PC-3 (cell line): ENCODE measurements at regions of chr4 and their contacts with region 1.

Region 1: GRCh38 chr4:47510506-47511143 is 25.6 kb downstream of the ATP10D start:
- DNase-seq: peak; percentile 14
- ATAC-seq: no peak
- H3K4me3 ChIP-seq: no peak overlapping the region
- H3K27ac ChIP-seq: no peak overlapping the region
- H3K4me1 ChIP-seq: no peaks in the 10 kb centered on the region
- H3K27me3 ChIP-seq: peaks cover 11% of the 10 kb centered on the region
- CTCF ChIP-seq: peak; percentile 36; the same call in 1 of the 2 replicates

Region 2: DNA sequence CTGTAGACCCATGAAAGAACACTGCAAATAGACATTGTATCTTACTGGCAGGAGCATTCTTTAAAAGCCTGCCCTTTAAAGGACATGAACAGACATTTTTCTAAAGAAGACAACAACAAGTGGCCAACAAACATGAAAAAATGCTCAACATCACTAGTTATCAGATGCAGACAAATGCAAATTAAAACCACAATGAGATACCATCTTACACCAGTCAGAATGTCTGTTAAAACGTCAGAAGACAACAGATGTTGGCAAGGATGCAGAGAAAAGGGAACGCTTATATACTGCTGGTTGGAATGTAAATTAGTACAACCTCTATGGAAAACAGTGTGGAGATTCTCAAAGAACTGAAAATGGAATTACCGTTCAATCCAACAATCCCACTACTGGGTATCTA is 51.7 kb after region 1 on chr4:
- CTCF ChIA-PET with region 1: no interaction called
- POLR2A ChIA-PET with region 1: interaction called, 3 read pairs
- intact Hi-C with region 1: loop called (anchors 10 kb)
- DNase-seq: no peak
- ATAC-seq: no peak
- H3K4me3 ChIP-seq: no peak overlapping the region
- H3K27ac ChIP-seq: no peak overlapping the region
- H3K4me1 ChIP-seq: peaks cover 8% of the 10 kb centered on the region; the same call in 1 of the 2 replicates
- H3K27me3 ChIP-seq: no peaks in the 10 kb centered on the region
- CTCF ChIP-seq: no peak

Region 3: DNA sequence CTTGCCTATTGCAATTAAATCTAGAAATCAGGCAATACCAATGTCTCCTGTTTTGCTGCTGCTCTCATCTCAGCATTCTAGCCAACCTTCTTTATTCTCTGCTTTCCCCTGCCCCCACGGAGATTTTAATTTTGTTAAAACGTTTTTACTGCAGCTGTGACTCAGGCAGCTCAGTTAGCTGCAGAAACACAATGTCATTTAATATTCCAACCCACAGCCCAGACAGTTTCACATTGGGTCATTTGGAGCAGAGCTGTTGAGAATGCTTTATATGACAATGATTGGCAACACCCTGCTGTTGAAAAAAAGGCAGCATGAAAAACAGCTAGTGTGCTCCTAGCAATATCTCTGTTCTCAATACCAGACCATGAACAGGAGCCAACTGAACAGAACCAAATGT is 959.9 kb after region 1 on chr4:
- CTCF ChIA-PET with region 1: no interaction called
- POLR2A ChIA-PET with region 1: no interaction called
- intact Hi-C with region 1: no loop called
- DNase-seq: no peak
- ATAC-seq: no peak
- H3K4me3 ChIP-seq: no peak overlapping the region
- H3K27ac ChIP-seq: no peak overlapping the region
- H3K4me1 ChIP-seq: no peaks in the 10 kb centered on the region
- H3K27me3 ChIP-seq: no peaks in the 10 kb centered on the region
- CTCF ChIP-seq: no peak